ENCODE measurements at regions of chr2 and their contacts with region 1.

Region 1: DNA sequence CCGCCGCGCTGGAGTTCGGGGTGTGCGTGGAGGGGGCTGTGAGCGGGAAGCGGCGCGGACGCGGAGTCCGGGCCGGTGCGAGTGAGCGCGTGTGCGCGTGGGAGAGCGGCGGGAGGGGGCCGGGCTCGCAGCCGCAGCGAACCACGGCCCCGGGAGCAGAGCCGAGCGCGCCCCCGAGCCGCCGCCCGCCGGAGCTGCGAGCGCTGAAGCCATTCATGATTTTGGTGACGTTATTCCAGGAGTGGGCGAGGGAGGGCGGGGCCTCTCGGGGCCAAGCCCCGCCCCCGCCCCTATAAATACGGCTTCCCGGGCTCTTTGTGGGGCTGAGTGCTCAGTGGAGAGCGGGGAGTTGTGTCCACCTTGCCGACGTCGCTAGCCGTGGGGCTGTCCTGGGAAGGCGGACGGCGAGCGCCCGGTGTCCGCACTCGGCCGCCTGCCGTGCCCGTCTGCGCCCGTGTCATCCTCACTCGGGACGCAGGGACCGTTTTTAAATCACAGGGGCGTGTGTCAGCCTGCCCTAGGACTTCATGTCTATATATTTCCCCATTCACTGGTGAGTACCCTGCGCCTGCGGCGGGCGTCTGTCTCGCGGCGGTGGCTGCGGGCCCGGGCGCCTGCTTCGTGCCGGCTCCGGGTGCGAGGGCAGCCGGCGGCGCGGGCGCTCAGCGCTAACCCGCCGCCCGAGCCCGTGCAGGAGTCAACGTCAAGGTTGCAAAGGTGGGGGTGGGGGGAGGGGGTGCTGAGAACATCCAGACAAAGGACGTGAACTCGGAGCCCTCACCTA is at the start of gene LBH:
- DNase-seq: peak; percentile 86 to 96 (median 90)
- ATAC-seq: peak; percentile 57
- H3K4me3 ChIP-seq: peak within 1 kb of the TSS; percentile 87
- H3K4me3 Mint-ChIP-seq: peak within 1 kb of the TSS; percentile 93
- H3K27ac ChIP-seq: peak within 1 kb of the TSS; percentile 90 to 96
- H3K27ac Mint-ChIP-seq: peak within 1 kb of the TSS; percentile 99
- H3K4me1 ChIP-seq: peaks cover 58% of the 10 kb centered on the region
- H3K4me1 Mint-ChIP-seq: peaks cover 72% of the 10 kb centered on the region
- H3K27me3 ChIP-seq: no peaks in the 10 kb centered on the region
- H3K27me3 Mint-ChIP-seq: no peaks in the 10 kb centered on the region
- CTCF ChIP-seq: no peak
- total RNA-seq, gene LBH: 131 to 135 TPM

Region 2: DNA sequence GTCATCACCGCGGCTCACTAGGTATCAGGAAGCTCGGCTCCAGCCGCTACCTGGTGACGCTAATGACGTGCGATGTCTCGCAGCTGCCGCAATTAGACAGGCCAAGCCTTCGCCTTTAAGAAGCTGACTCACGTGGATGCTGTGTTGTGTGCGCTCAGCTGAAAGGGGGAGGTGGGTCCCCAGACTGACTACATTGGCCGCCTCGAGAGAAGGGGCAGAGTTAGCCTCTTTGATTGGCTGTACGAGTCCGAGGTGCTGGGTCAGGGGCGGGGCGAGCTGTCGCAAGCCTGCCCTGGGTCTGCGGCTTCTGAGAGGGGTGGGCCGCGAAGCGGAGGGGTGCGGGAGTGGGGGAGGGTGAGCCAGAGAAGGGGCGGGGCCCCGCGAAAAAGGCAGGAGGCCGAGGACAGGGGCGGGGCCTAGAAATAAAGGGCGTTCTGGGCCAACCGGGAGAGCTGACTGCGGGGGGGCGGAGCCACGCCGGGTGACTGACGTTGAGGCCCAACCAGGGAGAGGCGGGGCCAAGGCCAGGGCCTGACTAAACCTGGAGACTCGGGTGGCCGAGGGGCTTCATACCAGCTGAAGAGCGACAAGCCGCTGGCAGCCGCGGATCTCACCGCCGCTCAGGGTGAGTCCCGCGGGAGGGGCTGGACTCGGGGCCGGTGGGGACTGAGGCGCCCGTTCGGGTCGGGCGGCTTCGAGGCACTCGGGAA is 84.8 kb before region 1 on chr2 and contains the start of gene YPEL5:
- CTCF ChIA-PET with region 1: interaction called, 4 read pairs
- POLR2A ChIA-PET with region 1: interaction called, 115 read pairs
- intact Hi-C with region 1: loop called (anchors 2 kb)
- DNase-seq: peak; percentile 99 to 100 (median 99)
- ATAC-seq: peak; percentile 82
- H3K4me3 ChIP-seq: peak within 1 kb of the TSS; percentile 71
- H3K4me3 Mint-ChIP-seq: peak within 1 kb of the TSS; percentile 94
- H3K27ac ChIP-seq: peak within 1 kb of the TSS; percentile 97 to 100
- H3K27ac Mint-ChIP-seq: peak within 1 kb of the TSS; percentile 99
- H3K4me1 ChIP-seq: peaks cover 38% of the 10 kb centered on the region
- H3K4me1 Mint-ChIP-seq: peaks cover 68% of the 10 kb centered on the region
- H3K27me3 ChIP-seq: no peaks in the 10 kb centered on the region
- H3K27me3 Mint-ChIP-seq: no peaks in the 10 kb centered on the region
- CTCF ChIP-seq: no peak
- total RNA-seq, gene YPEL5: 932 to 972 TPM

Region 3: DNA sequence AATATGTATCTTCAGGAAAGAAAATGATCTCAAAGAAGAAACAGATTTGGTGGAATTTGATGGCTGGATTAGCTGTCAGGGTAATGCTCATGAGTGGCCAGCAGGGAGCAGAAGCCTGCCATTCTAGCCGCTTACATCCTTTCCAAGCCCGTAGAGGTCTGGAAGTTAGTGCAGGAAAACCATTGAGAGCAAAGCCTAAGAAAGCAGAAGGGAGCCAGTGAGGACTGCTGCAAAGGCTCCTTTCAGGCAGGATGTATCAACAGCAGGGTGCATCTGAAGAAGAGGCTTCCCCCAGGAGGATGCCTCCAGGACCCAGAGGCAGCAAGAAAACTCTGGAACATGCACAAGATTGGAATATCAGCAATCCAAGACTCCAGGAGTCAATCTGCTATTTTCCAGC is 23.0 kb before region 1 on chr2:
- CTCF ChIA-PET with region 1: interaction called, 46 read pairs
- POLR2A ChIA-PET with region 1: interaction called, 137 read pairs
- intact Hi-C with region 1: no loop called
- DNase-seq: peak in 10 of 14 experiments; percentile 16 to 74 (median 33)
- ATAC-seq: peak; percentile 58
- H3K4me3 ChIP-seq: no peak overlapping the region
- H3K4me3 Mint-ChIP-seq: peak overlapping the region; percentile 42
- H3K27ac ChIP-seq: peak overlapping the region in 1 of 2 donors; percentile 9
- H3K27ac Mint-ChIP-seq: peak overlapping the region; percentile 82
- H3K4me1 ChIP-seq: peaks cover 21% of the 10 kb centered on the region
- H3K4me1 Mint-ChIP-seq: peaks cover 31% of the 10 kb centered on the region
- H3K27me3 ChIP-seq: no peaks in the 10 kb centered on the region
- H3K27me3 Mint-ChIP-seq: no peaks in the 10 kb centered on the region
- CTCF ChIP-seq: peak; percentile 96

Region 4: GRCh38 chr2:30252723-30253701 is 21.6 kb after region 1 on chr2:
- CTCF ChIA-PET with region 1: interaction called, 8 read pairs
- POLR2A ChIA-PET with region 1: interaction called, 373 read pairs
- intact Hi-C with region 1: loop called in 1 of 2 experiments (anchors 2 kb)
- DNase-seq: peak in 7 of 14 experiments; percentile 33 to 63 (median 45)
- ATAC-seq: peak; percentile 37
- H3K4me3 ChIP-seq: no peak overlapping the region
- H3K4me3 Mint-ChIP-seq: peak overlapping the region; percentile 57
- H3K27ac ChIP-seq: peak overlapping the region; percentile 70 to 79
- H3K27ac Mint-ChIP-seq: peak overlapping the region; percentile 99
- H3K4me1 ChIP-seq: peaks cover 98% of the 10 kb centered on the region
- H3K4me1 Mint-ChIP-seq: peaks cover 94% of the 10 kb centered on the region
- H3K27me3 ChIP-seq: no peaks in the 10 kb centered on the region
- H3K27me3 Mint-ChIP-seq: no peaks in the 10 kb centered on the region
- CTCF ChIP-seq: no peak

Region 5: DNA sequence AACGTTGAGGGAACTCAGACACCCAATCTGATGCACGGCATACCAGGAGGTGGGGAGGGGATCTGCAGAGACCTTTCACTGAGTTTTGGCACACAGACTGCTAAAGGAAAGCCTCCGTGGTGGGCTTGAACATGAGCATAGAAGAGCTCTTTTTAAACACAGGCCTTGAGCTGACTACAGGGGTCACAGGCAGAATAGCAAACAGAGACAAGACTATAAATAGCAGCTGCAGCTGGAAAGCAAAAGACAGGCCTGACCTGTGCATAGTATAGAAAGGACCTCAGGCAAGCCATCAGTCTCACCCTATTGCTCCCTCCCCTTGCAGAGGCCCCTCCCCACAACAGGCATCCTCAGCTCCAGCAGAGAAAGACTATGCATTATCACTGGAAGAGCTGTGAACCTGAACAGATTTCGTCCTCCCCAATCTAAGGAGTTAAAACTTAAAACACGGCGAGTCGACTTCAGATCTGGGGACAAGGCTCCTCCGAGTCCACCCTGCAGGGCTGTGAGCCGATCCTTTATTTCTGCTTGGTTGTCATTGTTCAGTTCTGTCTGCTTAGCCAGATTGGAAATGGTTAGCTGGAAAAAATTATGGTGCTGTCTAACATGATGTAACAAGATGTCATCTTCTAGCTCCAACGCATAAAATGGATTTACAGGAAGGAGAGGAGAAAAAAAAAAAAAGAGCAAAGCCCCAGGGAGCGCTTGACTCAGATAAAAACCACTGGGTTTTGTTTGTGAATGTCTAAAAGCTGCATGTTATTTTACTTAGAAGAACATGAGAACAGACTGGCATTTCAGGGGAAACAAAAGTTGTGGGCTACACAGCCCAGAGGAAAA is 190.4 kb after region 1 on chr2:
- CTCF ChIA-PET with region 1: no interaction called
- POLR2A ChIA-PET with region 1: interaction called, 24 read pairs
- intact Hi-C with region 1: loop called in 1 of 2 experiments (anchors 2 kb)
- DNase-seq: peak in 8 of 14 experiments; percentile 10 to 63 (median 19)
- ATAC-seq: peak; percentile 47
- H3K4me3 ChIP-seq: no peak overlapping the region
- H3K4me3 Mint-ChIP-seq: peak overlapping the region; percentile 43
- H3K27ac ChIP-seq: peak overlapping the region; percentile 48 to 51
- H3K27ac Mint-ChIP-seq: peak overlapping the region; percentile 82
- H3K4me1 ChIP-seq: peaks cover 30% of the 10 kb centered on the region
- H3K4me1 Mint-ChIP-seq: peaks cover 42% of the 10 kb centered on the region
- H3K27me3 ChIP-seq: no peaks in the 10 kb centered on the region
- H3K27me3 Mint-ChIP-seq: no peaks in the 10 kb centered on the region
- CTCF ChIP-seq: no peak

Region 6: GRCh38 chr2:30447149-30448045 is 216.0 kb after region 1 on chr2 and contains the start of gene LCLAT1:
- CTCF ChIA-PET with region 1: no interaction called
- POLR2A ChIA-PET with region 1: interaction called, 43 read pairs
- intact Hi-C with region 1: loop called (anchors 2 kb)
- DNase-seq: peak; percentile 68 to 94 (median 78)
- ATAC-seq: peak; percentile 84
- H3K4me3 ChIP-seq: peak within 1 kb of the TSS; percentile 82
- H3K4me3 Mint-ChIP-seq: peak within 1 kb of the TSS; percentile 99
- H3K27ac ChIP-seq: peak within 1 kb of the TSS; percentile 81 to 85
- H3K27ac Mint-ChIP-seq: peak within 1 kb of the TSS; percentile 99
- H3K4me1 ChIP-seq: peaks cover 14% of the 10 kb centered on the region
- H3K4me1 Mint-ChIP-seq: peaks cover 54% of the 10 kb centered on the region
- H3K27me3 ChIP-seq: no peaks in the 10 kb centered on the region
- H3K27me3 Mint-ChIP-seq: no peaks in the 10 kb centered on the region
- CTCF ChIP-seq: no peak
- total RNA-seq, gene LCLAT1: 8.3 to 10.2 TPM

Region 7: DNA sequence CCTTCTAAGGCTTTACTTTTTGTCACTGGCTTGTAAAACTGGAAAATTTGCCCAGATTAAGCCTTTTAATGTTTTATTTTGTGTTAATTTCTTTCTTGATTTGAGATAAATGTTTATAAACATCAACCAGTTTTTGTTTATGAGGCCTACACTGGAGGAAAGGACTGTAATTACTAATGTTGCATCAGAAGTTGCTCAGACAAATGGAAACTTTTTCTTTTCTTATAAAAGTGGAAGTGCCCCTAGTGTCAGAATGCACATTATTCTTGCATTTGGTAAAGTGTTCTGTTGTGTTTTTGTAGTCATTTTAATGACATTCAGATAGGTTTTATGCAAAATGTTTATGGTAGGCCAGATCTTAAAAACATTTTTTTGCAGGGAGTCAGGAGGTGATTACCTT is 240.9 kb after region 1 on chr2:
- CTCF ChIA-PET with region 1: no interaction called
- POLR2A ChIA-PET with region 1: interaction called, 9 read pairs
- intact Hi-C with region 1: loop called in 1 of 2 experiments (anchors 10 kb)
- DNase-seq: peak in 1 of 14 experiments; percentile 9
- ATAC-seq: no peak
- H3K4me3 ChIP-seq: no peak overlapping the region
- H3K4me3 Mint-ChIP-seq: no peak overlapping the region
- H3K27ac ChIP-seq: no peak overlapping the region
- H3K27ac Mint-ChIP-seq: no peak overlapping the region
- H3K4me1 ChIP-seq: no peaks in the 10 kb centered on the region
- H3K4me1 Mint-ChIP-seq: peaks cover 49% of the 10 kb centered on the region
- H3K27me3 ChIP-seq: no peaks in the 10 kb centered on the region
- H3K27me3 Mint-ChIP-seq: no peaks in the 10 kb centered on the region
- CTCF ChIP-seq: no peak

Region 8: DNA sequence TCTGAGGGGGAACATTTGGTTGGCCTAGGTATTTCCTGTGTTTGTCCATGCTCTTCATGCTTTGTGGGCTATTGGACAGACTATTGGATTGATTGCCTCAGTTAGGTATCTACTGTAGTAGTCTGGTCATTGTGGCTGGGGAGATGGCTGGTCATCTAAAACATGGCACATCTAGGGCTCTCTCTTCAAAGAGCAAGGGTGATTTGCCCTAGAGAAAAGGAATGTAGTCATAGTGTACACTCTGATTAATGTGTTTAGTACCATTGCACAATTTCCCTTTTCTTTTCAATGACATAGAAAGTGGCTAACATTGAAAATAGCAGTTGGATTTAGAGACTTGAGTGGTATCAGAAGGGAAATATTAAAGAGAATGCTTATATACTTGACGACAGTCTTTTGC is 329.9 kb after region 1 on chr2:
- CTCF ChIA-PET with region 1: no interaction called
- POLR2A ChIA-PET with region 1: no interaction called
- intact Hi-C with region 1: no loop called
- DNase-seq: no peak
- ATAC-seq: no peak
- H3K4me3 ChIP-seq: no peak overlapping the region
- H3K4me3 Mint-ChIP-seq: no peak overlapping the region
- H3K27ac ChIP-seq: no peak overlapping the region
- H3K27ac Mint-ChIP-seq: no peak overlapping the region
- H3K4me1 ChIP-seq: no peaks in the 10 kb centered on the region
- H3K4me1 Mint-ChIP-seq: peaks cover 25% of the 10 kb centered on the region
- H3K27me3 ChIP-seq: no peaks in the 10 kb centered on the region
- H3K27me3 Mint-ChIP-seq: no peaks in the 10 kb centered on the region
- CTCF ChIP-seq: no peak

Measured in CD4-positive, alpha-beta T cell (primary cell).